IMR-90 (cell line): ENCODE measurements at regions of chr5 and their contacts with region 1.

Region 1: GRCh38 chr5:98773464-98774191 is at the start of gene RGMB:
- DNase-seq: peak; percentile 99
- ATAC-seq: peak; percentile 85
- H3K4me3 ChIP-seq: peak within 1 kb of the TSS; percentile 81
- H3K27ac ChIP-seq: peak within 1 kb of the TSS; percentile 83
- H3K4me1 ChIP-seq: peaks cover 2% of the 10 kb centered on the region; the same call in 1 of the 2 replicates
- H3K27me3 ChIP-seq: no peaks in the 10 kb centered on the region
- CTCF ChIP-seq: no peak
- POLR2A ChIP-seq: peak; percentile 48
- RAD21 ChIP-seq: no peak
- total RNA-seq, gene RGMB: 74.4 and 83.0 TPM in 2 replicates

Region 2: GRCh38 chr5:97183100-97183929 is 1590.3 kb before region 1 on chr5 and contains the start of gene RIOK2:
- CTCF ChIA-PET with region 1: no interaction called
- POLR2A ChIA-PET with region 1: no interaction called
- dilution Hi-C with region 1: no loop called
- in situ Hi-C with region 1: loop called (anchors 10 kb)
- intact Hi-C with region 1: loop called (anchors 2 kb)
- DNase-seq: peak; percentile 93
- ATAC-seq: peak; percentile 96
- H3K4me3 ChIP-seq: peak within 1 kb of the TSS; percentile 82
- H3K27ac ChIP-seq: peak within 1 kb of the TSS; percentile 86
- H3K4me1 ChIP-seq: peaks cover 2% of the 10 kb centered on the region; the same call in 1 of the 2 replicates
- H3K27me3 ChIP-seq: no peaks in the 10 kb centered on the region
- CTCF ChIP-seq: no peak
- POLR2A ChIP-seq: peak; percentile 87
- RAD21 ChIP-seq: peak; percentile 16; the same call in 1 of the 2 replicates
- total RNA-seq, gene RIOK2: 17.7 and 26.1 TPM in 2 replicates

Region 3: DNA sequence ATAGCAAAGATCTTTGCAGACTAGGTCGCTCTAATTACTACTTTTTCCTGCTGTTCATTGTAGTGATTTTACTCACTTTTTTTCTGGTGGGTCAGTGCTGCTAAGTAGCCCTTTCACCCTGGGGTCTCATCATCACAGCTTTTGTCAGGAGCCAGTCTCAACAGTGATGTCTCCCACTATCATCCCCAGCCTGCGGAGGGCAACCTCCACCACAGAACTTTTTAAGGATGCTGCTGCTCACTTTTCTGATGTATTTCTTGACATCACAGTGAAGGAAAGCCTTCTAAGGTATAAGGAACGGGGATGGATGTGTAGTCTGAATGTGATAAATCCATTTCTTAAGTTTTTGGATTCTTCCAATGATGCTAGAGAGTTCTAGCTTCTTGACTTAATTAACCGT is 1348.1 kb before region 1 on chr5:
- CTCF ChIA-PET with region 1: interaction called, 3 read pairs
- POLR2A ChIA-PET with region 1: no interaction called
- dilution Hi-C with region 1: no loop called
- in situ Hi-C with region 1: no loop called
- intact Hi-C with region 1: loop called (anchors 2 kb)
- DNase-seq: peak; percentile 16
- ATAC-seq: no peak
- H3K4me3 ChIP-seq: no peak overlapping the region
- H3K27ac ChIP-seq: no peak overlapping the region
- H3K4me1 ChIP-seq: no peaks in the 10 kb centered on the region
- H3K27me3 ChIP-seq: no peaks in the 10 kb centered on the region
- CTCF ChIP-seq: peak; percentile 42
- POLR2A ChIP-seq: no peak
- RAD21 ChIP-seq: peak; percentile 49

Region 4: GRCh38 chr5:98096155-98096554 is 677.5 kb before region 1 on chr5:
- CTCF ChIA-PET with region 1: no interaction called
- POLR2A ChIA-PET with region 1: interaction called, 4 read pairs
- dilution Hi-C with region 1: no loop called
- in situ Hi-C with region 1: no loop called
- intact Hi-C with region 1: loop called (anchors 1 kb)
- DNase-seq: peak; percentile 92
- ATAC-seq: peak; percentile 95
- H3K4me3 ChIP-seq: no peak overlapping the region
- H3K27ac ChIP-seq: peak overlapping the region; percentile 79; the same call in 1 of the 2 replicates
- H3K4me1 ChIP-seq: peaks cover 4% of the 10 kb centered on the region
- H3K27me3 ChIP-seq: no peaks in the 10 kb centered on the region
- CTCF ChIP-seq: no peak
- POLR2A ChIP-seq: no peak
- RAD21 ChIP-seq: no peak

Region 5: GRCh38 chr5:98309785-98310598 is 463.6 kb before region 1 on chr5:
- CTCF ChIA-PET with region 1: no interaction called
- POLR2A ChIA-PET with region 1: interaction called, 4 read pairs
- dilution Hi-C with region 1: no loop called
- in situ Hi-C with region 1: no loop called
- intact Hi-C with region 1: loop called (anchors 1 kb)
- DNase-seq: peak; percentile 99
- ATAC-seq: peak; percentile 78
- H3K4me3 ChIP-seq: peak overlapping the region; percentile 24; the same call in 1 of the 2 replicates
- H3K27ac ChIP-seq: peak overlapping the region; percentile 77
- H3K4me1 ChIP-seq: peaks cover 15% of the 10 kb centered on the region; the same call in 1 of the 2 replicates
- H3K27me3 ChIP-seq: no peaks in the 10 kb centered on the region
- CTCF ChIP-seq: 0 out of 2 replicates have a peak, but pooled peaks have one; percentile 9
- POLR2A ChIP-seq: peak; percentile 81; the same call in 1 of the 2 replicates
- RAD21 ChIP-seq: peak; percentile 47

Region 6: DNA sequence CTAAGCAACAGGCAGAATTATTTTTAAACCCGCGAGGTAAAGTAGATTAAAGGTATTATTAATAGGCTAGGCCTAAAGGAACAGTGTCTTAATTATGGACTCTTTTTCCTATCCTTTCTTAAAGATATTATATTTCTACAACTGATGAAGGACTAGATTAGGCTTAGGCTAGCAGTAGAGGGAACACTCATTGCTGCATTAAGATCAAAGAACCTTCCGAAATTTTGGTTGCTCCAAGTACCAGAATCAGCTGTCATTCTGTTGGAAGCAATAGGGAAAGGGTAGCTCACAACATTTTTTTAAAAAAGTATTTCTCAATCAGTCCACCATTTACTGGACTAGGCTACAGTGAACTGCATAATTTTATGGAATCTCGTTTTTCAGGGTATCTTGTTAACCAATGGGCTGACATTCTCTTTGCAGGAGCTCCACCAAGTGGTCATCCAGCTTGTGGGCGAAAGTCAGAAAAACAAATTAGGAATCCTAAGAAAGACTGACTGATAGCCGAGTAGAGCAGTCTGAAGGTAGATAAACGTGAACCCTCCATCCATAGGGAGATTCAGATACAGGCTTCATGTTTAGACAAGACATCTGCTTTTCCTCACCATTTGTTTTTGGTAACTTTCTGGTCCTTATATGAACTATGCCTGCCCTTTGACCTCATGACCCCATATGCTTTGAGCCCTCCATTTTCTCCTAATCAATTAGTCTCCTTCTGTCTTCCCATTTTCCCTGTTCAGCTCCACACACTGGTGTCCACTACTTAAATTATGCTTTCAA is 258.8 kb after region 1 on chr5:
- CTCF ChIA-PET with region 1: no interaction called
- POLR2A ChIA-PET with region 1: no interaction called
- dilution Hi-C with region 1: no loop called
- in situ Hi-C with region 1: no loop called
- intact Hi-C with region 1: loop called (anchors 10 kb)
- DNase-seq: peak; percentile 80
- ATAC-seq: peak; percentile 94
- H3K4me3 ChIP-seq: peak overlapping the region; percentile 55; the same call in 1 of the 2 replicates
- H3K27ac ChIP-seq: no peak overlapping the region
- H3K4me1 ChIP-seq: peaks cover 4% of the 10 kb centered on the region; the same call in 1 of the 2 replicates
- H3K27me3 ChIP-seq: no peaks in the 10 kb centered on the region
- CTCF ChIP-seq: peak; percentile 90
- POLR2A ChIP-seq: no peak
- RAD21 ChIP-seq: peak; percentile 93